ENCODE measurements at regions of chr14 and their contacts with region 1.

Region 1: DNA sequence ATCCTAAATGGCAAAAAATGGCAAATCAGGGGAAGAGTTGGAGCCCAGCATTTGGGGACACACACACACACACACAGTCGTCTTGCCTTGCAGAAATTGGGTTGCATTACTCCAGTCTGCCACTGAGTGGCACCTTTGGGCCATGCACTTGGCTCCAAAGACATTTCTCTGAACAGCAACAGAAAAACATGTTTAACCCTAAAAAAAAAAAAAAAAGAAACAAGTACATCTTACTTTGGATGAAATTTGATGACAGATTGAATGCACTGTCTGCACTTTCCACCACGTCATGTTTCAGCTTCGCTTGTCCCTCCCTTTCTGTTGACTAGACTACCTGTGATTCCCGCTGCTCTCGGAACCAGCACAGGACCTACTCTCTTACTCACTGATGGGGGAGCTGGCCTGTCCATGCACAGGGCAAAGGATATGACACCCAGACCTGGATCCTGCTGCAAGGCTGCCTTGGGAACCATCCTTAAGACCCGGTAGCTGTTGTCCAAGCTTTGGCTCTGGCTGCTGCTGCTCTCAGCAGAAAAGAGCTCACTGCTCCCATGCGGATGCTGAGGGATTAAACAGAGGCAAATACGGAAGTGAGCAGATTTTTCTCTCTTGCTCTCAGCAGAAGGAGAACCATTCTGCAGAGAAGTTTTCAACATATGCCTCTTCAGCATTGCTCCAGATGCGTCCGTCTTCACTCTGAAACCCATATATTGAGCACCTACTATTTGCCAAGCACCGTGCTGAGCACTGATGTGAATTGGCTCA is 376.8 kb downstream of the DPF3 start:
- DNase-seq: peak; percentile 71
- H3K4me3 ChIP-seq: no peak overlapping the region
- H3K27ac ChIP-seq: no peak overlapping the region
- H3K4me1 ChIP-seq: peaks cover 34% of the 10 kb centered on the region
- CTCF ChIP-seq: peak; percentile 88

Region 2: DNA sequence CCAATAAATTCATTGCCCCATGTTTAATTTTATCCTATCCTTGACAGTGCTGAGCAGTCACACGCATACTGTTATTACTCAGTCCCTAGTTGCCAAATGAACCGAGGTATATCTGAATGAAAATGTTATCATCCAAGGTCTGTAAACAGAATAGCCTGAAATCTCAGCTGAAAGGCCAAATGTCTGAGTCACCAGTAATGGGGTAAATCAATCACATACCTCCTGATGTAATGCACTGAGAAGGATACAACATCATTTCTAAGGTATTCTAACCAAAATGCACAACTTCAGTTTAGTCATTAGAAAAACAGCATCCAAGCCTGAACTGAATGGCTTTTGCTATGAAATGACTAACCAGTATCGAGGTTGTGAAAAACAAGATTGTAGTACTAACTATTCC is 148.1 kb after region 1 on chr14:
- CTCF ChIA-PET with region 1: no interaction called
- POLR2A ChIA-PET with region 1: no interaction called
- intact Hi-C with region 1: loop called (anchors 10 kb)
- DNase-seq: no peak
- H3K4me3 ChIP-seq: no peak overlapping the region
- H3K27ac ChIP-seq: no peak overlapping the region
- H3K4me1 ChIP-seq: no peaks in the 10 kb centered on the region
- CTCF ChIP-seq: no peak

Region 3: DNA sequence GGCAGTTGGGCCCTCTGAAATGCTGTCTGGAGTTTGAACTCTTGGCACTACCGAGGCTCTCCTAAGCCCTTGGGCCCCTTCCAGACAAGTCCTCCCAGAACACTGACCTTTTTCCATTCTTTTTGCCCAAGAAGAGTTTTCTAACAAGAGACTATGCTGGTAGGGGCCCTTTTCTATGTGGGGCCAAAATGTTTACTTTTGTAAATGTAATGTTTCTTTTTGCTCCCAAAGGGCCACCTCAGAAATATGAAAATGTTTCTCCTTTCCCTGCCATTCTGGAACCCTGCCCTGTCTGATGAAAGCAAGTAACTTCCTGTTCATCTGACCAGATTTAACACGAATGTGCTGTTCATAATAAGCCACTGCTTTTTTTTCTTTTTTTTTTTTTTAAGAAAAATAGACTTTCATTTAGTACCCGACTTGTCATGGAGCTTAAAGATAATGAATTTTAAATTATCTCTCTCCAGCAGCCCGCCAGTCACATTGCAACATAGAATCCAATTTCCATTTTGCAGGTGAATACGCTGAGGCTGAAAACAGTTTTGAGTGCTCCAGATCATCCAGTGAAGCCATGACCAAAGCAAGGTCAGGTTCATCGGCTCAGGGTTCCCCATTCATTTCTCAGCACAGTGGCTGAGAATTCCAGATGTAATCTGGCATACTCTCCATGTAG is 206.9 kb after region 1 on chr14:
- CTCF ChIA-PET with region 1: no interaction called
- POLR2A ChIA-PET with region 1: no interaction called
- intact Hi-C with region 1: loop called (anchors 10 kb)
- DNase-seq: no peak
- H3K4me3 ChIP-seq: no peak overlapping the region
- H3K27ac ChIP-seq: no peak overlapping the region
- H3K4me1 ChIP-seq: no peaks in the 10 kb centered on the region
- CTCF ChIP-seq: no peak

Region 4: GRCh38 chr14:72904840-72905561 is 387.9 kb after region 1 on chr14:
- CTCF ChIA-PET with region 1: interaction called, 3 read pairs
- POLR2A ChIA-PET with region 1: interaction called, 5 read pairs
- intact Hi-C with region 1: loop called (anchors 1 kb)
- DNase-seq: peak; percentile 71
- H3K4me3 ChIP-seq: no peak overlapping the region
- H3K27ac ChIP-seq: no peak overlapping the region
- H3K4me1 ChIP-seq: no peaks in the 10 kb centered on the region
- CTCF ChIP-seq: peak; percentile 99

Region 5: GRCh38 chr14:72948481-72949138 is 431.5 kb after region 1 on chr14:
- CTCF ChIA-PET with region 1: interaction called, 4 read pairs
- POLR2A ChIA-PET with region 1: no interaction called
- intact Hi-C with region 1: loop called (anchors 2 kb)
- DNase-seq: peak; percentile 61
- H3K4me3 ChIP-seq: no peak overlapping the region
- H3K27ac ChIP-seq: no peak overlapping the region
- H3K4me1 ChIP-seq: no peaks in the 10 kb centered on the region
- CTCF ChIP-seq: peak; percentile 99

Measured in OCI-LY7 (cell line).